SK-N-SH (cell line): ENCODE measurements at regions of chr20 and their contacts with region 1.

Region 1: GRCh38 chr20:49508435-49509199 is 26.1 kb upstream of the KCNB1 start:
- DNase-seq: peak; percentile 74
- H3K4me3 ChIP-seq: no peak overlapping the region
- H3K27ac ChIP-seq: no peak overlapping the region
- H3K4me1 ChIP-seq: peaks cover 10 to 15% of the 10 kb centered on the region in 2 experiments; a peak in 2 of 4 replicates
- H3K27me3 ChIP-seq: no peaks in the 10 kb centered on the region
- CTCF ChIP-seq: peak; percentile 69
- EP300 ChIP-seq: no peak
- RAD21 ChIP-seq: peak; percentile 74

Region 2: GRCh38 chr20:49323622-49324238 is 184.9 kb before region 1 on chr20:
- CTCF ChIA-PET with region 1: interaction called, 317 read pairs
- POLR2A ChIA-PET with region 1: no interaction called
- DNase-seq: peak; percentile 41
- H3K4me3 ChIP-seq: no peak overlapping the region
- H3K27ac ChIP-seq: no peak overlapping the region; a peak in 1 of 4 replicates
- H3K4me1 ChIP-seq: peaks cover 0 to 8% of the 10 kb centered on the region in 2 experiments; a peak in 1 of 4 replicates
- H3K27me3 ChIP-seq: peaks cover 14% of the 10 kb centered on the region
- CTCF ChIP-seq: peak; percentile 56
- EP300 ChIP-seq: no peak
- RAD21 ChIP-seq: peak; percentile 72

Region 3: DNA sequence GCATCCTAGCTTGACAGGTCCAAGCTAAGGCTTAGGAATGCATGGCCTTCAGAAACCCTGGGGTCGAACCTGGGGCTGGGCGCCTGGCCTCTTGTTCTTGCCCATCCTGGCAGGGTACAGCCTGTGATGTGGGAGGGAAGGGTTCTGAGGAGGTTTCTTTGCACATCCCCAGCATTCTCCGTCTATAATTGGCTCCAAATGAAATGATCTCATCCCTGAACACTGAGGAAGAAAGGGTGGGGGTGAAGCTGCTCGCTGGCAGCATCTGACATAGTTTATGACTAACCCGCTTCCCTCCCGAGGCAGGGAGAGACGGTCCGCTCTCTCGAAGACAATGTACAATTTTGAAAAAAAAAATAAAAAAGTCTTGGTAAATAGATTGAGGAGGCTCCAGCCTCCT is 163.6 kb before region 1 on chr20:
- CTCF ChIA-PET with region 1: interaction called, 36 read pairs
- POLR2A ChIA-PET with region 1: no interaction called
- DNase-seq: peak; percentile 39
- H3K4me3 ChIP-seq: peak overlapping the region; percentile 3 to 31; a peak in 2 of 4 replicates
- H3K27ac ChIP-seq: peak overlapping the region; percentile 73 to 95; a peak in 3 of 4 replicates
- H3K4me1 ChIP-seq: peaks cover 7 to 20% of the 10 kb centered on the region in 2 experiments; a peak in 3 of 4 replicates
- H3K27me3 ChIP-seq: no peaks in the 10 kb centered on the region
- CTCF ChIP-seq: no peak
- EP300 ChIP-seq: peak in 1 of 2 experiments; percentile 91; a peak in 1 of 4 replicates
- RAD21 ChIP-seq: no peak

Region 4: DNA sequence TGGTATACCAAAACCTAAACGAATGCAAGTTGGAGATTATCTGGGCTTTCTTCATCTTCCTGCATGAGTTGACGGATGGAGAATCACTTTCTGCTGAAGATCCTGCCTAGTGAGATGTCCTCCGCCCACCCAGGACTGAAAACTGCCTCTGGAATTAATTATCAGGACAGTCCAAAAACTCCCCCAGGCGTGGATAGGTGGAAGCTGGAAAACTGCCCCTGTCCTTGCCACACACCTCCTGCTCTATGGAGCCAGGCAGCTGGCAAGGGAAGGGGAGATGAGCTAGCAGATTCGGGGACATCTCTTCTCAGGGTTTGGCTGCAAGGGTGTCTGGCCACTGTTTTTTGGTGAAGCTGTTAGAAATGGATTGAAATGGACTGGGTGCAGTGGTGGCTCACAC is 141.5 kb before region 1 on chr20:
- CTCF ChIA-PET with region 1: interaction called, 11 read pairs
- POLR2A ChIA-PET with region 1: no interaction called
- DNase-seq: peak; percentile 47
- H3K4me3 ChIP-seq: no peak overlapping the region
- H3K27ac ChIP-seq: peak overlapping the region in 1 of 2 experiments; percentile 72; a peak in 2 of 4 replicates
- H3K4me1 ChIP-seq: peaks cover 0 to 24% of the 10 kb centered on the region in 2 experiments; a peak in 2 of 4 replicates
- H3K27me3 ChIP-seq: peaks cover 4% of the 10 kb centered on the region; the same call in 1 of the 2 replicates
- CTCF ChIP-seq: no peak
- EP300 ChIP-seq: 0 out of 4 replicates have a peak, but pooled peaks of 1 of the 2 experiments have one; percentile 4
- RAD21 ChIP-seq: no peak

Region 5: DNA sequence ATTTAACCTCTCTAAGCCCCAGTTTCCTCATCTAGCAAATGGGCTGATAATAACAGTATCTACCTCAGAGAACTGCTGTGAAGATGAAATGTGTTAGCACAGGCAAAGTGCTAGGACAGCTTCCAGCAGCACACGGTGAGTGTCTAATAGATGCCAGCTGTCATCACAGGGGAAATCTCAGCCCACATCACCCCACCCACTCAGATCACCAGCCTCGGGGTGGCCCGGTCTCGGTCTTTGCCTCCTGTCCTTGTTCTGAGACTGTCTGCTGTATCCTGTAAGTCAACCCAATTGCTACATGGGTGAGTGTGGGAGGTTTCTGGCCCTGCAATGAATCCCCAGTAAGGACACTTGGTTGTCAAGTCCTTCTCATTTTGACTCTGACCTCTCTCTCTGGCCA is 131.3 kb before region 1 on chr20:
- CTCF ChIA-PET with region 1: interaction called, 24 read pairs
- POLR2A ChIA-PET with region 1: no interaction called
- DNase-seq: peak; percentile 48
- H3K4me3 ChIP-seq: no peak overlapping the region
- H3K27ac ChIP-seq: no peak overlapping the region
- H3K4me1 ChIP-seq: peaks cover 0 to 30% of the 10 kb centered on the region in 2 experiments; a peak in 2 of 4 replicates
- H3K27me3 ChIP-seq: no peaks in the 10 kb centered on the region
- CTCF ChIP-seq: no peak
- EP300 ChIP-seq: peak in 1 of 2 experiments; percentile 36; a peak in 1 of 4 replicates
- RAD21 ChIP-seq: 0 out of 2 replicates have a peak, but pooled peaks have one; percentile 14

Region 6: DNA sequence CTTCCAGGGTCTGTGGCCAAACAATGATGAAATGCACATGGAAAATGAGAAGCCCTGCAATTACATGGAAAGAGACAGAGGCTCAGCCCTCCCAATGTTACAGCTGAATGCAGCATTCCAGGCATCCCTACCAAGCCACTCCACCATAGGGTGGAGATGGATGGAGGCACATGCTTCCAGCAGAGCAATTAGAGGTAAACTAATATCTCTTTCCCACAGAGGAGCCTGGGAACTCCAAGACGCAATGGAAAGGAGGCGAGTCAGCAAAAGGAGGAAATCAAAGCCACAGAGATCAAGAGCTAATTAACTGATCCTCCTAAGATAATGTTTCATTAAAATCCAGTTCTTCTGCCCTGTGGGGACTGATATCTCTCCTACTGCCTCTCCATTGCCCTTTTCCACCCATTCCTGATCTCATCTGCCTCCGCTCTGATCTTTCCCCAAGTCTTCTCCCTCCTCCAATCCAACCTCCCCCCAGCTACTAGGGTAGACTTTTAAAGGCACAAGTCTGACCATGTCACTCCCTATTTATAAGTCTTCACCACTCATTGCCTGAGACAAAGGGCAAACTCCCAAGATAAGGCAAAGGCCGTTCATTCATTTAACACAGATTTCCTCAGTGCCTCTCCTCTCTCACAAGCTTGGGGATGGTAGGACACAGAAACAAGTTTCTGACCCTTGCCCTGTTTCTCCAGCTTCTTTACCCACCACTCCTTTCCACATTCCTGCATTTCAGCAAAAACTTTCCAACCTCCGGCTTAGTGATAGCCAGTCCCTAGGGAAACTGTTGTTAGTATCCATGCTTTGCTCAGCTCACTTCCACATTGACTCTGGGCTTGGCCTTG is 11.8 kb before region 1 on chr20:
- CTCF ChIA-PET with region 1: interaction called, 29 read pairs
- POLR2A ChIA-PET with region 1: no interaction called
- DNase-seq: no peak
- H3K4me3 ChIP-seq: no peak overlapping the region
- H3K27ac ChIP-seq: no peak overlapping the region
- H3K4me1 ChIP-seq: no peaks in the 10 kb centered on the region
- H3K27me3 ChIP-seq: peaks cover 12% of the 10 kb centered on the region
- CTCF ChIP-seq: no peak
- EP300 ChIP-seq: no peak
- RAD21 ChIP-seq: no peak

Region 7: DNA sequence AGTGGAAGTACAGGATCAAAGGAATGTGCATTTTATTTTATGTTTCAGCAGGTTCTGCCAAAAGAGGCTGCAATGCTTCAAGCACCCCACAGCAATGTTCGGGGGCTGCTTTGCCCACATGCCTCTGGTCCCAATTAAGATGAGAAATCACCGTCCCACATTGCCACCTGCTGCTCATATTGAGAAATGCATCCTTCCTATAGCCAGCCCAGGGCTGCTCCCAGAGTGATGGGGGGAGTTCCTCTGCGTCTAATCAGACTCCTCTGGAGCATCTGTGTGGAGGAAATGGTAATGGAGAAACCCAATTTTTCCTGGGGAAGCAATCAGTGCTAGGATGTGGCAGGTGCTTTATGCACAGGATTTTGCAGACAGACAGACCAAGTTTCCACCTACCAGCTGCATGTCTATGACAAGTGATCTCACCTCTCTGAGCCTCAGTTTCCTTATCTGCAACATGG is 25.7 kb after region 1 on chr20:
- CTCF ChIA-PET with region 1: interaction called, 78 read pairs
- POLR2A ChIA-PET with region 1: no interaction called
- DNase-seq: peak; percentile 79
- H3K4me3 ChIP-seq: no peak overlapping the region
- H3K27ac ChIP-seq: no peak overlapping the region
- H3K4me1 ChIP-seq: peaks cover 0 to 5% of the 10 kb centered on the region in 2 experiments; a peak in 1 of 4 replicates
- H3K27me3 ChIP-seq: no peaks in the 10 kb centered on the region
- CTCF ChIP-seq: peak; percentile 80
- EP300 ChIP-seq: no peak; a peak in 1 of 4 replicates
- RAD21 ChIP-seq: peak; percentile 85